ENCODE measurements at regions of chr16 and their contacts with region 1.

Region 1: DNA sequence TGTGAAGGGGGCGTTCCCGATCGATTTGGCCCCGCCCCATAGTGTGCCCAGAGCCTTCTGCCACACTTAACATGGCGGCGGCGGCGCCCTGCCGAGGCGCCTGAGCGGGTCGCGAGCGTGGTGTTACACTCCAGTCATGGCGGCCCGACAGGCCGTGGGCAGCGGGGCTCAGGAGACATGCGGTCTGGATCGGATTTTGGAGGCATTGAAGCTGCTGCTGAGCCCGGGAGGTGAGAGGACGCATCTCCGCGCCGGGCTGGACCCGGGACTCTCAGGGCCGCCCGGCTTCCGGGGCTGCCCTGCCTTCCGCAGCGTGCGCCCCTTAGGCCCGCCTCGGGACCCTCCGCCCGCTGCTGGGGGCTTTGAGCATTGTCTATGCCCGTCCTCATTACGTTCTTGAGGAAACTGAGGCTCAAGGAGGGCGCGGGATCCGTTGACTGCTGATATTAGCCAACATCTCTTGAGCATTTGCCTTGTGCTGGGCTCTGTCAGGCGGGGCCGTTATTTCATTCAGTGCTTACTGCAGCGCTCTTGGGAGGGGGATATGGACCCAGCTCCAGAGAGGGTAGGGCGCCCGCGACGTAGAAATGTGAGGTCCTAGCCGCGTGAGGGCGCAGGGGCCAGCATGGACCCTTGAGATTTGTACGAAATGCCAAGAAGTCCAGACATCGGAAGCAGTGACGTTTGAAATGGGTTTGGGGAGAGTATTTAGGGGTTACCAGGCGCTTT is at the start of gene TANGO6:
- DNase-seq: peak; percentile 90 to 96
- ATAC-seq: peak; percentile 96
- H3K4me3 ChIP-seq: peak within 1 kb of the TSS; percentile 45 to 56
- H3K27ac ChIP-seq: peak within 1 kb of the TSS in 1 of 2 donors; percentile 34
- H3K4me1 ChIP-seq: peaks cover 0 to 2% of the 10 kb centered on the region in 2 donors
- H3K27me3 ChIP-seq: no peaks in the 10 kb centered on the region
- total RNA-seq, gene TANGO6: 19.9 to 26.6 TPM

Region 2: DNA sequence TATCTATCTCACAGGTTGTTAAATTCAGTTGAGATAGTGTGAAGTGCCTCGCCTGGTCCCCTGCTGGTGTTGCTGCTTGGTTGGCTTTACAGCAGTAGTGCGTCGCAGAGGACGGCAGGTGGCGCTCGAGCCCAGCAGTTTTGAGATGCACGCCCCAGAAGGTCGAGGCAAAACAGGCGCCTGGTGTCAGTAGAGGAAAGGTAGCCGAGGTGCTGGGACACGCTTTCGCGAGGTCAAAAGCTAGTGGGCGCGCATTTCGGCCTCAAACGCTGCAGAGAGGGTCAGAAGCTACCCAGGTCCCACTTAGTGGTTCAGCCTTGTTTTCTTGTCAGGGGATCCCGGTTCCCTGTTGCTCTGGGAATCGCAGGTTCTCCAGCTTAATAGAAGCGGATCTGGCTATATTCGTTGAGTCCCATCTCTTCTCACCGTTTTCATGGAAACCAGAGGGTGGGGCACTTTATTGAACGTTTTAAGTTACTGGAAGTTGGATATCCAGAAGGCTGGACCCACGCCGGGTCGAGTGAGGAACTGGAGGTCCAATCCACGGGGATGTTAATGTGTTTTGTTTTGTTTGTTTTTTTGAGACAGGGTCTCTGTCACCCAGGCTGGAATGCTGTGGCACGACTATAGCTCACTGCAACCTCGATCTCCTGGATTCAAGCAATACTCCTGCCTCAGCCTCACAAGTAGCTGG is 314.8 kb before region 1 on chr16:
- intact Hi-C with region 1: loop called (anchors 2 to 10 kb)
- DNase-seq: peak; percentile 89 to 95
- ATAC-seq: peak; percentile 94
- H3K4me3 ChIP-seq: no peak overlapping the region
- H3K27ac ChIP-seq: no peak overlapping the region
- H3K4me1 ChIP-seq: no peaks in the 10 kb centered on the region
- H3K27me3 ChIP-seq: no peaks in the 10 kb centered on the region

Region 3: GRCh38 chr16:68538880-68539701 is 304.6 kb before region 1 on chr16 and contains the start of gene ZFP90:
- intact Hi-C with region 1: loop called in 1 of 2 experiments (anchors 10 kb)
- DNase-seq: peak; percentile 94 to 96
- ATAC-seq: peak; percentile 98
- H3K4me3 ChIP-seq: peak within 1 kb of the TSS; percentile 87 to 89
- H3K27ac ChIP-seq: peak within 1 kb of the TSS in 1 of 2 donors; percentile 41
- H3K4me1 ChIP-seq: no peaks in the 10 kb centered on the region
- H3K27me3 ChIP-seq: no peaks in the 10 kb centered on the region
- total RNA-seq, gene ZFP90: 17.1 to 31.0 TPM

Region 4: DNA sequence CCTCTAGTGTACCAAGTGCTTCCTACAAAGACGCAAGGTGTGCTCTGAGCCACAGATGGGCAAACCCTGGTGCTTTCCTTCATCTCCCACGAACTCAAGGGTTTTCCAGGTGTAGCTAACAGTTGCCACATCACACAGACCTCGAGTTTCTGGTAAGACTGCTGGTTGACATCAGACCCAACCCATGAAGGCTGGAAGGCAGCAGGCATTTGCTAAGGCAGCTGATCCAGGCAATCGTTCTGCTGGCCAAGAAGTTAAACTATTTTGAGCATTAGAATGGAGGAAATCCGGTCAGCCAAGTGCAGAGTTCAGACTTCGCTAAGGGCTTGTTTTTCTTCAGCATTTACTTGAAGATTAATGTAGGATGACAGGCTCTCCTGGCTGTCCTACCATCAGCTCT is 273.3 kb after region 1 on chr16:
- intact Hi-C with region 1: loop called in 1 of 2 experiments (anchors 5 kb)
- DNase-seq: no peak
- ATAC-seq: no peak
- H3K4me3 ChIP-seq: no peak overlapping the region
- H3K27ac ChIP-seq: no peak overlapping the region
- H3K4me1 ChIP-seq: no peaks in the 10 kb centered on the region
- H3K27me3 ChIP-seq: no peaks in the 10 kb centered on the region

Region 5: DNA sequence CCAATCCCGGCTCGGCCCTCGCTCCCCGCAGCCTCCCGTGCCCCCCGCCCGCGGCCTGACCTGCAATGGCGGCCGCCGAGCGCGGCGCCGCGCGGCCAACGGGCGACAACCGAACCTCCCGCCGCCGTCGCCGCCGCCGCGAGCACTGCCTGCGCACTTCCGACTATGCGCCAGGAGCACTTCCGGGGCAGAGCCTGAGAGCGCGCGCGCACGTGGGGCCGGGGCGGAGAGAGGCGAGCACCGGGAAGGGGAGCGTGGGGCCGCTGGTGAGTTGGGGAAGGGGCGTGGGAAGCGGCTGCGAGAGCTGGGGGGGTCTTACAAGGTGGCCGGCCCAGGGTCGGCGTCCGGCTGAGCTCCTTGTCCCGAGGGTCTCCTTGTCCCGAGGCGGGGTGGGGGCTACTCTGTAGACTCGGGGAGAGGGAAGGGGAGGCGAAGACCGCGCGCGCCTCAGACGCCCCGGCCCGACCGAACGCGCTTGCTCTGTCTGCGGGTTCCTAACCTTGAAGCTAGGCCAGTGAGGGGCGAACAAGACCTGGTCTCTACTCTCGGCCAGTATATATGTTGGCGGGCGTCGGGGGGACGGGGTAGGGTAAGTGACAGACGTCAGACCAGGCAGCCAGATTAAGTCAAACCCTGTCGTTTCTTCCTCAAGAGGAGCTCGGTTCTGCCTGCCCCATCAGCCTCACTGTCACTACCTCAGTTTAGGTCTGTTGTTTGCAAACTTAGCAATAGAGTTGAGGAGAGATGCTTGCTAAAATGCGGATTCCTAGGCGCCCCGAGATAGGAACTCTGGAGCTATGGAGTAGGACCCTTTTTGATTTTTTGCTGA is 289.0 kb after region 1 on chr16 and contains the starts of genes CHTF8 and UTP4:
- intact Hi-C with region 1: loop called in 1 of 2 experiments (anchors 10 kb)
- DNase-seq: peak; percentile 93 to 97
- ATAC-seq: peak; percentile 95
- H3K4me3 ChIP-seq: peak within 1 kb of the TSS; percentile 81 to 98
- H3K27ac ChIP-seq: peak within 1 kb of the TSS in 1 of 2 donors; percentile 59
- H3K4me1 ChIP-seq: no peaks in the 10 kb centered on the region
- H3K27me3 ChIP-seq: no peaks in the 10 kb centered on the region
- total RNA-seq, gene CHTF8: 73.2 to 77.3 TPM
- total RNA-seq, gene UTP4: 34.9 to 37.6 TPM